Activated CD4-positive, alpha-beta T cell treated with anti-CD3 and anti-CD28 coated beads for 36 hours (primary cell): ENCODE measurements at regions of chr17 and their contacts with region 1.

Region 1: DNA sequence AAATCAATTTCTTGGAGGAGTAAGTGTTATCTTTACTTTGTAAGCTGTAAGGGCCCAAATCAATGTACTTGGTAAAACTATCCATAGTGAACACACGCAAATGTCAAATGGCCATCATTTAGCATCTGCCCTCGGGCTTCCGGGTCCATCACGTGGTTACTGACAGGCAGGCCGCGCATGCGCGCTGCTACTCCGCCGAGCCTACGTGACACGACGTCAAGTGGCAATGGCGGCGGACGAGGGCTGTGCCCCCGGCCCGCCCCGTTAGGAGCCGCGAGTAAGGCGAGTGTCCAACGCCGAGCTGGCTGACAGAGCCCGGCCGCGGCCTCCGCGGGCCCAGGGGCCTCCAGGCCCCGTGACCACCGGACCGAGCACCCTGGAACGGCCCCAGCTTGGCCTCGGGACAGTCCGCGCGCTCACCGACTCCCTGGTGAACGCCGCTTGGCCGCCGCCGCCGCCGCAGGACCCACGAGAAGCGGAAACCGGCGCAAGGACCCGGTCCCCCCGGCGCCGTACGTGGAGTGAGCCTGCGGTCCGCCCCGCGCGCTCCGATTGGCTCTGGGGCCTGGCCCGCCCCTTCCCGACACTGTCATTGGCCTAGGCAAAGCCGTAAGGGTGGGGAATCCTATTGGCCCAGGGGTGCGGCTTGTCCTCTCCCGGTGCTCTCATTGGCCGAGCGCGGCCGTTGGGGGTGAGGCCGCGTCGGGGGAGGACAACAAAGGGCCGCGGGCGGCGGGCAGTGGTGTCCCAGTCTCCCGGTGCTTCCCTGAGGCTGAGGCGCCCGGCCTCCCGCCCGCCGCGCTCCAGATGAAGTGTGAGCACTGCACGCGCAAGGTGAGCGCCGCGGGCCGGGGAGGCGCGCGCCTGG is at the start of gene NARF:
- DNase-seq: peak; percentile 98
- ATAC-seq: peak; percentile 99
- H3K4me3 Mint-ChIP-seq: peak within 1 kb of the TSS; percentile 79
- H3K27ac Mint-ChIP-seq: peak within 1 kb of the TSS; percentile 99
- H3K4me1 Mint-ChIP-seq: peaks cover 28% of the 10 kb centered on the region
- H3K27me3 Mint-ChIP-seq: no peaks in the 10 kb centered on the region
- total RNA-seq, gene NARF: 65.4 to 85.9 TPM

Region 2: DNA sequence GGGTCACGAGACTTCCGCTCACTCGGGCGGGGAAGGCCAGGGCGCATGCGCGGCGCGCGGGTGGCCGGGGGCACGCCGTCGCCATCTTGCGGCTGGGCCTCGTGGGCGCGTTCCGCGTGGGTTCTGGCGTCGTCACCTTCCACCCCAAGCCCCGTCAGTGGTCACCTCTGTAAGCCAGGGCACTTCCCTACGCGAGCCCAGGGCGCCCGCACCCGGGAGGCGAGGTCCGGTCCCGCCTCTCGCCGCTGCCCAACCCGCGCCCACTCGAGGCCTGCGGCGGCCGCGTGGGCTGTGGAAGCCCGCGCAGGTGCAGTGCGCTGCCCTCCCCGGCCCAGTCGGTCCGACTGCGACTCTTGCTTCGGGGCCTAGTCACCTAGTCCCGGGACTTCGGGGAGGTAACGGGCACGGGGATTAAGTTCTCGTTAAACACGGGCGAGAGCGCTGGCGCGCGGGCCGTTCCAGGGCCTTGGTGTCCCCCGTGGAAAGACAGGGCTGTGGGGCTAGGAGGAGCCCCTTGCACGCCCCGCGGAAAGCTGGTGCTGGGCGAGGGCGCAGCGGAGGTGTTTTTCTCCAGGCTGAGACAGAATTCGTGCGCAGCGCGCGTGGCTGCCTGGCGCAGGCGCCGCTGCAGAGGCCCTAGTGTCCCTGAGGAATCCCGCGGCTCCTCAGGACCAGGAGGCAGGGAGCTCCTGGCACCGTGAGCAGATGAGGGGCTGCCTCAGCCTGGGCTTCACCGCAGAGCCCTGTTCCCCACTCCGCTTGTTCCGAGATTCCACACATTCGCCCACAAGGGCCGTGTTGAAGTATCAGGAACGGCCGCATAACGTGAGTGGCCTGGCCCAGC is 586.6 kb before region 1 on chr17:
- CTCF ChIA-PET with region 1: no interaction called
- POLR2A ChIA-PET with region 1: no interaction called
- intact Hi-C with region 1: loop called in 1 of 2 experiments (anchors 1 kb)
- DNase-seq: peak; percentile 98
- ATAC-seq: no peak
- H3K4me3 Mint-ChIP-seq: peak overlapping the region; percentile 81
- H3K27ac Mint-ChIP-seq: peak overlapping the region; percentile 92
- H3K4me1 Mint-ChIP-seq: peaks cover 34% of the 10 kb centered on the region
- H3K27me3 Mint-ChIP-seq: no peaks in the 10 kb centered on the region

Region 3: DNA sequence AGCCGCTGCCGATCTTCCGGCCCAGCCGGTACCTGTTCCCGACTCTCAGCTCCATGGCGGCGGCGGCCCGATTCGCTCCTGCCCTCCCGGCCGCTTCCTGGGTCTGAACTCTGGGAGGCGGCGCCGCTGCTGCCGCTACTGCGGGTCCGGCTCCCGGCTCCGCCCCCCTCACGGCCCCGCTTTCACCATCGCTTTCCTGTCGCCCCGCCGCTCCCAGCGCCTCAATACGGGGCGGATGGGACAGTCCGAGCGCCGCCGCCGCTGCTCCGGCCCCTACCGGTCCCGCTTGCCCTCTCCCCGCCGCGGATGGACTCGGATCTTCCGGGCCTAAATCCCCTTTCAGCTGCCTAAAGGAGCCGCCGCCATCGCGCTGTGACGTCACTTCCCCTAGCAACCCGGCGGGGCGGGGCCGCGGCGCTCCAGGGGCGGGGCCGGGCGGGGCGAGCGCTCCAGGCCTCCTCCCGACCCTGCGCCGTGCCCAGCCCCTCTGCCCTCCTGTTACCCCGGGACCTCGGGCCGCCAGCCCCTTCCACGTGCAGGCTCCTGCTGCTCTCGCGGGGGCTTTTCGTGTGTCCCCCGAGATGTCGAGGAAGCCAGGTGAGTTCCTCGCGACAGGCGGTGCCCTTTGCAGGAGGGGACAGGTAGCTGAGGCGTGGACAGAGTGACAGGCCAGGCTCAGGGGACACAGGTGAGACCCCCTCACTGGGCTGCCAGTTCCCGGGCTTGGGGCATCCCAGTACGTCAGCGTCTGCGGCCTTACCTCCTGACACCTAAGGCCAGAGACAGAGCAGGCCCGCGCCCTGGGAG is 184.7 kb before region 1 on chr17 and contains the start of gene CSNK1D:
- CTCF ChIA-PET with region 1: no interaction called
- POLR2A ChIA-PET with region 1: no interaction called
- intact Hi-C with region 1: loop called in 1 of 2 experiments (anchors 1 kb)
- DNase-seq: peak; percentile 96
- ATAC-seq: peak; percentile 81
- H3K4me3 Mint-ChIP-seq: peak within 1 kb of the TSS; percentile 90
- H3K27ac Mint-ChIP-seq: peak within 1 kb of the TSS; percentile 94
- H3K4me1 Mint-ChIP-seq: peaks cover 39% of the 10 kb centered on the region
- H3K27me3 Mint-ChIP-seq: no peaks in the 10 kb centered on the region
- total RNA-seq, gene CSNK1D: 118 to 182 TPM

Region 4: DNA sequence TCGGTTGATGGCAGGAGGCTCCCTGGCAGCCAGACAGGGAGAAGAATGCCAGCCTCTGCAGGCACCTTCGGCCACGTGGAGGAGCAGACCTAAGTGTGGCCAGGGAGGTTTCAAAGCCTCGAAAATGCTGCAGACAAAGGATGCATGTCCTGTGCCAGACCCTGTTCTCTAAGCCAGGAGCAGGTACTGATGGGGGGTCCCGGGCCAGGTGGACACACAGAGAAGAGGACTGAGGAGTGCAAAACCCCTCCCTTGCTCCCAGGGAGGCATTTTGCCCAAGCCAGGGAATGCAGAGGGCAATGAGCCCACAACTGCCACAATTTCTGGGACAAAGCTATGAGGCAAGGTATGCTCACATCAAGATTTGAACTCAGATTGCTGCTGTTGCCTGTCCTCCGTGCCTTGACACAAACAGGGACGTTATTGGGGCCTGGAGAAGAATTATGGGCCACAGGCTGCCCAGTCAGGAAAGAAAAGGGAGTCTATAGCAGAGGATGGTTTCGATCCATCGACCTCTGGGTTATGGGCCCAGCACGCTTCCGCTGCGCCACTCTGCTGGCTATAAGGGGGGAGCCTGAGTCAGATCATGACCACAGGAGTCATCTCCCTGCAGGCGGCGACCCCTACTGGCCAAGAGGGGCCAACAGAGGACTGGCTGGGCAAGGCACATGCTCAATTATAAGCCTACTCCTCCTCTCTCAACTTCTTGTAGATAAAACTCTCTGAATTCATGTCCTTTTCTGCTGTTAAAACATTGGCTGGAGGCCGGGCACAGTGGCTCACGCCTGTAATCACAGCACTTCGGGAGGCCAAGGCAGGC is 36.2 kb after region 1 on chr17:
- CTCF ChIA-PET with region 1: no interaction called
- POLR2A ChIA-PET with region 1: no interaction called
- intact Hi-C with region 1: loop called (anchors 1 kb)
- DNase-seq: peak; percentile 93
- ATAC-seq: peak; percentile 80
- H3K4me3 Mint-ChIP-seq: peak overlapping the region; percentile 60
- H3K27ac Mint-ChIP-seq: peak overlapping the region; percentile 76
- H3K4me1 Mint-ChIP-seq: peaks cover 14% of the 10 kb centered on the region
- H3K27me3 Mint-ChIP-seq: no peaks in the 10 kb centered on the region

Region 5: GRCh38 chr17:82592767-82593589 is 134.7 kb after region 1 on chr17:
- CTCF ChIA-PET with region 1: no interaction called
- POLR2A ChIA-PET with region 1: no interaction called
- intact Hi-C with region 1: loop called in 1 of 2 experiments (anchors 1 kb)
- DNase-seq: peak; percentile 76
- ATAC-seq: peak; percentile 25
- H3K4me3 Mint-ChIP-seq: peak overlapping the region; percentile 71
- H3K27ac Mint-ChIP-seq: peak overlapping the region; percentile 98
- H3K4me1 Mint-ChIP-seq: peaks cover 45% of the 10 kb centered on the region
- H3K27me3 Mint-ChIP-seq: no peaks in the 10 kb centered on the region

Region 6: GRCh38 chr17:83051395-83052233 is 593.4 kb after region 1 on chr17:
- CTCF ChIA-PET with region 1: no interaction called
- POLR2A ChIA-PET with region 1: no interaction called
- intact Hi-C with region 1: loop called in 1 of 2 experiments (anchors 2 kb)
- DNase-seq: peak; percentile 99
- ATAC-seq: peak; percentile 89
- H3K4me3 Mint-ChIP-seq: peak overlapping the region; percentile 85
- H3K27ac Mint-ChIP-seq: peak overlapping the region; percentile 86
- H3K4me1 Mint-ChIP-seq: peaks cover 37% of the 10 kb centered on the region
- H3K27me3 Mint-ChIP-seq: no peaks in the 10 kb centered on the region